IMR-90 (cell line): ENCODE measurements at regions of chr15 and their contacts with region 1.

Region 1: GRCh38 chr15:89566141-89566540 is 9.1 kb upstream of the TICRR start:
- DNase-seq: no peak
- ATAC-seq: no peak; the same call in 1 of the 2 replicates
- H3K4me3 ChIP-seq: no peak overlapping the region
- H3K27ac ChIP-seq: no peak overlapping the region
- H3K4me1 ChIP-seq: no peaks in the 10 kb centered on the region
- H3K27me3 ChIP-seq: peaks cover 13% of the 10 kb centered on the region
- CTCF ChIP-seq: no peak
- POLR2A ChIP-seq: no peak
- RAD21 ChIP-seq: no peak

Region 2: GRCh38 chr15:89430530-89431341 is 135.4 kb before region 1 on chr15:
- CTCF ChIA-PET with region 1: no interaction called
- POLR2A ChIA-PET with region 1: no interaction called
- dilution Hi-C with region 1: no loop called
- in situ Hi-C with region 1: no loop called
- intact Hi-C with region 1: loop called (anchors 5 kb)
- DNase-seq: peak; percentile 43
- ATAC-seq: peak; percentile 99
- H3K4me3 ChIP-seq: peak overlapping the region; percentile 42
- H3K27ac ChIP-seq: no peak overlapping the region
- H3K4me1 ChIP-seq: no peaks in the 10 kb centered on the region
- H3K27me3 ChIP-seq: peaks cover 43% of the 10 kb centered on the region
- CTCF ChIP-seq: peak; percentile 90
- POLR2A ChIP-seq: no peak
- RAD21 ChIP-seq: peak; percentile 81